ENCODE measurements at regions of chr22 and their contacts with region 1.

Region 1: DNA sequence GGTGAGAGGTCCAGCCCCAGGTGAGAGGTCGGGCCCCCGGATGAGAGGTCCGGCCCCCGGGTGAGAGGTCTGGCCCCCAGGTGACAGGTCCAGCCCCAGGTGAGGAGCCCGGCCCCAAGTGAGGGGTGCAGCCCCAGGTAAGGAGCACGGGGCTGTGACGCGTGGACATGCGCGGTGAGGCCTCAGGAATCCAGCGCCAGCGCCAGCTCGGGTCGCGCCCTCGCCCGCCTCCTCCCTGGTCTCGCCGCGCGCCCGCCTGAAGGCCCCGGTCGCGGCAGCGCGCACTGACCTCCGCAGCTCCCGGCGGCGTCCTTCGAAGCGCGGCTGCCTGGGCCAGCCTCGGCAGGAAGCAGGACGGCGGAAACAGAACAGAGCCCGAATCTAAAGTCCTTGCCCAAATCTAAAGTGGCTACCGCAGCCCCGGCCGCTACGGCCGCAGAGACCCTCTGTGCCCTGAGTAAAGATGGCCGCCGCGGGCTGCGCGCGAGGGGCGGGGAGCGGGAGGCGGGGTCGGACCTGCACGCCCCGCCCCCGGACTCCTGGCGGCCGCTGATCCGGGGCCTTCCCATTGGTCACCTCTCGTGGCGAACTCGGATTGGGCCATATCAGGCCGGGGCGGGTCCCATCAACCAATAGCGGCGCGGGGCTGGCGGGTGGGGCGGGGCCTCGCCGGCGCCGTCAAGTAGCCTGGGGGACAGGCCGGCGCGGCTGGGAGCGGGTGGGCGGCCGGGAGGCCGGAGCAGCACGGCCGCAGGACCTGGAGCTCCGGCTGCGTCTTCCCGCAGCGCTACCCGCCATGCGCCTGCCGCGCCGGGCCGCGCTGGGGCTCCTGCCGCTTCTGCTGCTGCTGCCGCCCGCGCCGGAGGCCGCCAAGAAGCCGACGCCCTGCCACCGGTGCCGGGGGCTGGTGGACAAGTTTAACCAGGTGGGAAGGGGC is at the starts of genes ALG12 and CRELD2:
- DNase-seq: peak in 1 of 2 donors; percentile 97
- H3K4me3 ChIP-seq: peak within 1 kb of the TSS; percentile 72 to 93
- H3K27ac ChIP-seq: peak within 1 kb of the TSS; percentile 89
- H3K4me1 ChIP-seq: peaks cover 23% of the 10 kb centered on the region
- H3K27me3 ChIP-seq: no peaks in the 10 kb centered on the region
- CTCF ChIP-seq: no peak
- POLR2A ChIP-seq: peak in 1 of 2 donors; percentile 45
- total RNA-seq, gene ALG12: 21.4 TPM
- total RNA-seq, gene CRELD2: 34.4 TPM

Region 2: DNA sequence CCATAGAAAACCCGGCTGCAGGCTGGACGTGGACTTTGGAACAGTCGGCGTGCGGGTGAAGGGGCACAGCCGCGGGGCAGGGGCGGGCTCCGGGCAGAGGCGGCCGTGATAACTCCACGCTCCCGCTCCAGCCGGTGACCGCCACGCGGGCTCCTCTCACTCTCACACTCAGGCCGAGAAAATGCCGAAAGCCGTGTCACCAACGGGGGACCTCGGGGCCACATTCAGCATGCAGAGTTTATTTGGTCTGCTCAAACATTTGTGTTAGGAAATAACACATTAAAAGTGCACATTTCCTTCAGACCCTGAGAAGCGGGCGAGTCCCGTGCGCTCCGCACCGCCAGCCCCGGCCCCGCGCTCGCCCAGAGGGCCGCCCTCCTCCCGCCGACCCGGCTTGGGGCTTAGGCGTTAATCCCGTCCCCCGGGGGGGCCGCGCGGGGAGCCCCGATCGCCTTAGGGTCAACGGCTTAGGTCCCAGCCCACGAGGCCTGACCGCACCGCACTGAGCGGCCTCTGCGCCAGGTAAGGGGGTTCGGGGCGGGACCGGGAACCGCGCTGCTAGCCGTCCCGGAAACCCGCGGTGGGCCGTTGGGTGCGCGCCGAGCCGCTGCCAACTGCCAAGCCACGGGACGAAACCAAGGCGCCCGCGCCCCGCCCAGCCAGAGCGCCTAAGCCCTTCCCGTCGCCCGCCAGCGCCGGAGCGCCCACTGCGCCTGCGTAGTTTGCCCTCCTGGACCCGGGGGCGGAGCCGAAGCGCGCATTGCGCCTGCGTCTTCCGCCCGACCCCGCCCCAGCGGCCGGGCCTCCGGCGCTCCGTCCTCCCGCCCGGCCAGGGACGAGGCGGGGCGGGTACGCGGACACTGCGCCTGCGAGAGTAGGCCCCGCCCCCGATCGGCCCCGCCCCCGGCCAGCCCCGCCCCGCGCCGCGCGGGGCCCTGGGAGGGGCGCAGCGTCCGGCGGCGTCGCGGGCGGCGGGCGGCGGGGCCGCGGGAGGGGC is 65.0 kb before region 1 on chr22 and contains the start of gene ZBED4:
- intact Hi-C with region 1: loop called (anchors 5 kb)
- DNase-seq: peak in 1 of 2 donors; percentile 92
- H3K4me3 ChIP-seq: peak within 1 kb of the TSS; percentile 75 to 92
- H3K27ac ChIP-seq: peak within 1 kb of the TSS; percentile 88
- H3K4me1 ChIP-seq: peaks cover 32% of the 10 kb centered on the region
- H3K27me3 ChIP-seq: peaks cover 9% of the 10 kb centered on the region
- CTCF ChIP-seq: no peak
- POLR2A ChIP-seq: peak in 1 of 2 donors; percentile 85
- total RNA-seq, gene ZBED4: 9.1 TPM

Region 3: GRCh38 chr22:49960159-49961004 is 42.1 kb after region 1 on chr22 and contains the start of gene PIM3:
- intact Hi-C with region 1: no loop called
- DNase-seq: no peak
- H3K4me3 ChIP-seq: peak within 1 kb of the TSS; percentile 76 to 100
- H3K27ac ChIP-seq: peak within 1 kb of the TSS; percentile 89
- H3K4me1 ChIP-seq: peaks cover 40% of the 10 kb centered on the region
- H3K27me3 ChIP-seq: no peaks in the 10 kb centered on the region
- CTCF ChIP-seq: no peak
- POLR2A ChIP-seq: peak in 1 of 2 donors; percentile 95
- total RNA-seq, gene PIM3: 97.2 TPM

Region 4: GRCh38 chr22:50012716-50013181 is 94.5 kb after region 1 on chr22 and contains the start of gene IL17REL:
- intact Hi-C with region 1: no loop called
- DNase-seq: peak in 1 of 2 donors; percentile 72
- H3K4me3 ChIP-seq: no peak within 1 kb of the TSS
- H3K27ac ChIP-seq: no peak within 1 kb of the TSS
- H3K4me1 ChIP-seq: peaks cover 18% of the 10 kb centered on the region
- H3K27me3 ChIP-seq: peaks cover 11% of the 10 kb centered on the region
- CTCF ChIP-seq: no peak
- POLR2A ChIP-seq: no peak
- total RNA-seq, gene IL17REL: not detected

Measured in vagina (tissue), 2 donors.